Ovary (tissue), 10 donors: ENCODE measurements at regions of chr5 and their contacts with region 1.

Region 1: DNA sequence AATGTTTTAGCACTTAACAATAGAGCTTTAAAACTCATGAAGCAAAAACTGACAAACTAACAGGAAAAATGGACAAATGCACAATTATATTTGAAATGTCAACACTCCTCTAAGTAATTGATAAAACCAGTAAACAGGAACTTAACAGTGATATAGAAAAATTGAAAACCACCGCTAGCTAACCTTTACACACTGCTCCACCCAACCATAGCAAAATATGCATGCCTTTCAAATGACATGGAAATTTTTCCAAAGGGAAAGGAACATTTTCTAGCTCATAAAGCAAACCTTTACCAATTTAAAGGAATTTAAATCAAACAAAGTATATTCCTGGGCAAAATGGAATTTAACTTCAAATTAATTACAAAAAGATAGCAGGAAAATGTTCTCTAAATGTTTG is 109.2 kb downstream of the ADAMTS19 start:
- DNase-seq: no peak
- H3K4me3 ChIP-seq: no peak overlapping the region
- H3K27ac ChIP-seq: no peak overlapping the region
- H3K4me1 ChIP-seq: no peaks in the 10 kb centered on the region
- H3K27me3 ChIP-seq: no peaks in the 10 kb centered on the region
- CTCF ChIP-seq: no peak
- EP300 ChIP-seq: no peak
- POLR2A ChIP-seq: no peak

Region 2: DNA sequence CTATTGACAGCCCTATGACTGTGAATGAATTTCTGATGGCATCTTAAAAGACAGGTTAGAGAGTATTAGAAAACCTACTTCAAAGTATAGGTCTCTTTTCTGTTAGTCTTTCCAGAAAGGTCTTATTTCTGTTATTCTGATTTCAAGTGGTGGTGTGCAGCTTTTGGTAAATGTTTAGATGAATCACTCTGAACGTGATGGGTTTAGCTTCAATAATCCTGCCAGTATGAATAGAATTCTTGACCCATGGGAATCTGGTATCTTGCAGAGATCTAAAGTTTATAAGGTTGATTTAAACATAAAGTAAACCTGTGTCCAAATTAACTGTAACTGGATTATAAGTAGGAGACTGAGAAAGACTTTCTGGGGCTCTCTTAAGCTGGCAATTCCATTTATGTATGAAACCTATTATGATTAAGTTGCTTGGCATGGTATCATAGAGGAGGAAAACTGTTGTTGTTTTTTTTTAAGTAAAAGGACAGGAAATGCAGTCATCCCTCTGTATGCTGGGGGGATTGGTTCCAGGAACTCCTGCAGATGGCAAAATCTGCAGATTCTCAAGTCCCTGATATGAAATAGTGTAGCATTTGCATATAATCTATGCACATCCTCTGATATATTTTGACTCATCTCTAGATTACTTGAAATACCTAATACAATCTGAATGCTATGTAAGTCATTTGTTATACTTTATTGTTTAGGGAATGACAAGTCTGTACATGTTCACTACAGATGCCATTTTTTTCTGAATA is 186.2 kb before region 1 on chr5:
- intact Hi-C with region 1: loop called in 1 of 4 experiments (anchors 10 kb)
- DNase-seq: no peak
- H3K4me3 ChIP-seq: no peak overlapping the region
- H3K27ac ChIP-seq: no peak overlapping the region
- H3K4me1 ChIP-seq: no peaks in the 10 kb centered on the region
- H3K27me3 ChIP-seq: no peaks in the 10 kb centered on the region
- CTCF ChIP-seq: no peak
- EP300 ChIP-seq: no peak
- POLR2A ChIP-seq: no peak

Region 3: GRCh38 chr5:130034566-130035210 is 465.4 kb after region 1 on chr5:
- intact Hi-C with region 1: no loop called
- DNase-seq: no peak
- H3K4me3 ChIP-seq: no peak overlapping the region
- H3K27ac ChIP-seq: no peak overlapping the region
- H3K4me1 ChIP-seq: no peaks in the 10 kb centered on the region
- H3K27me3 ChIP-seq: no peaks in the 10 kb centered on the region
- CTCF ChIP-seq: no peak
- EP300 ChIP-seq: no peak
- POLR2A ChIP-seq: no peak